ENCODE measurements at regions of chr1 and their contacts with region 1.

Region 1: DNA sequence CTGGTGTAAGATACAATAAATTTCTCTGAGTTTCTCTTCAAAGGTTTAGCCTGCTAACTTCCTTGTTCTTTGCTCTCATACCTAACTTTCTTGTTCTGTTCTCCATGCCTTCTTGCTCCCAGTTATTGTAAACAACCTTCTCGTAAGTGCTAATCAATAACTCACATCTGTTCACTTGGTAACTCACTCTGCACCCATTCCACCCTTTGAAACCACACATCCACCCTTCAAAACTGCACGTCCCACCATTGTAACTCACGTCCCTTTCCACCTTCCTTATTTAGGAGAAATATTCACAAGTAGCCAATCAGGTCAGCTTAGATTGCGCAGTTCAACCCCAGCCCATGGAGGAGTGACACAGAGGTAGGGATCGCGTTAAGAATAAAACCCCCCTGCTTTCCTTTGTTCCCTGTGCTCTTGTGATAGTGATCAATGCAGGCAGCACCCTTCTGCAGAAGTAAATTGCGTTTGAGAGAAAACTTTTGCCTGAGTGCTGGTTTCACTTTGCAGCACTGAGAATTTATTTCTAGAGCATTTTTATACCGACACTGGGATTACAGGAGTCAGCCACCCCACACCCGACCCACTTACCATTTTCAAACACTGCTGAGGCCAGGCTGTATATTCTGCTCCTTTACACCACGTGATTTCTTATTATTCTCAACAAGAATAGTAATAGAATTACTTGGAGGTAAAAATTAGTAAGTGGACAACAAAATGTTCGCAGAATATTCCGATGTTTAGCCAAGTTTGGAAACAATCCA is 789.2 kb upstream of the RGS18 start:
- DNase-seq: no peak
- H3K27ac ChIP-seq: no peak overlapping the region
- CTCF ChIP-seq: no peak

Region 2: GRCh38 chr1:191043066-191043465 is 326.0 kb before region 1 on chr1:
- CTCF ChIA-PET with region 1: no interaction called
- POLR2A ChIA-PET with region 1: no interaction called
- DNase-seq: no peak
- H3K27ac ChIP-seq: no peak overlapping the region
- CTCF ChIP-seq: no peak

Region 3: GRCh38 chr1:191327868-191328267 is 41.2 kb before region 1 on chr1:
- CTCF ChIA-PET with region 1: no interaction called
- POLR2A ChIA-PET with region 1: interaction called, 10 read pairs
- DNase-seq: no peak
- H3K27ac ChIP-seq: no peak overlapping the region
- CTCF ChIP-seq: no peak

Measured in RWPE1 (cell line).